ENCODE measurements at regions of chr9 and their contacts with region 1.

Region 1: DNA sequence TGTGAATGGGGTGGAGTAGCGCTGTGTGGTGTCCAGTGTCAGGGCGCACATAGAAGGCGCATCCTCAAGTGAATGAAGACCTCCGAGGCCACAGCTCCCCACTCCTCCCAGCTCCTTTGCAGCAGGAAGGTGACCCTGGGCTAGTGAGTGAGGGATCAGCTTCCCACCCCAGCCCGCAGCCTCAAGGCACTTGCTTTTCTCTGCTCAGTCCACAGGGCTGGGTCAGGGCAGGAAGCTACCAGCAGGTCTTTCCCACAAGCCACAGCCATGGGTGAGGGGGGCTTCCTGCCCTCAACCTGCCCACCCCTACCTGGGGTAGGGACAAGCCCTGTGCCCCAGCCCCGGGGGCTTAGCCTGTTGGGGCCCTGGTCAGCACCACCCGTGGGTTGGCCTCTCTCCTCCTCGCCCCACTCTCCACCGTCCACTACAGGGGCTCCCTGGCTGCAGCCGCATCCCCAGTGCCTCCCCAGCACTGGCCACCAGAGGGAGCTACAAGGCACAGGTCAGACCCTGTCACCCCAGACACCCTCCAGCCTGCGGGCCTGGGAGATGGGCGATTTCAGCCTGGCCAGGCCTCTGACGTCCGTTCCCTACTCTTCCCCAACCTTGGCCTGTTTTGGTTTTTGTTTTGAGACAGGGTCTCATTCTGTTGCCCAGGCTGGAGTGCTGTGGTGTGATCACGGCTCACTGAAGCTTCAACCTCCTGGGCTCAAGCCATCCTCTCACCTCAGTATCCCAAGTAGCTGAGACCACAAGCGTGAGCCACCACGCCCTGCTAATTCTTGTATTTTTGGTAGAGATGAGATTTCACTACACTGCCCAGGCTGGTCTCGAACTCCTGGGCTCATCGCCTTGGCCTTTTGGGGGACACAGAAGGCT is 1.3 kb upstream of the ABCA2 start:
- DNase-seq: peak; percentile 85
- ATAC-seq: peak; percentile 31
- H3K4me3 ChIP-seq: peak overlapping the region; percentile 4 to 77 (median 66)
- H3K4me3 Mint-ChIP-seq: peak overlapping the region; percentile 90
- H3K27ac ChIP-seq: peak overlapping the region in 1 of 2 donors; percentile 71
- H3K27ac Mint-ChIP-seq: peak overlapping the region; percentile 92
- H3K4me1 ChIP-seq: peaks cover 61 to 78% of the 10 kb centered on the region in 2 donors
- H3K4me1 Mint-ChIP-seq: peaks cover 66% of the 10 kb centered on the region
- H3K27me3 ChIP-seq: no peaks in the 10 kb centered on the region
- H3K27me3 Mint-ChIP-seq: no peaks in the 10 kb centered on the region
- CTCF ChIP-seq: peak; percentile 87

Region 2: DNA sequence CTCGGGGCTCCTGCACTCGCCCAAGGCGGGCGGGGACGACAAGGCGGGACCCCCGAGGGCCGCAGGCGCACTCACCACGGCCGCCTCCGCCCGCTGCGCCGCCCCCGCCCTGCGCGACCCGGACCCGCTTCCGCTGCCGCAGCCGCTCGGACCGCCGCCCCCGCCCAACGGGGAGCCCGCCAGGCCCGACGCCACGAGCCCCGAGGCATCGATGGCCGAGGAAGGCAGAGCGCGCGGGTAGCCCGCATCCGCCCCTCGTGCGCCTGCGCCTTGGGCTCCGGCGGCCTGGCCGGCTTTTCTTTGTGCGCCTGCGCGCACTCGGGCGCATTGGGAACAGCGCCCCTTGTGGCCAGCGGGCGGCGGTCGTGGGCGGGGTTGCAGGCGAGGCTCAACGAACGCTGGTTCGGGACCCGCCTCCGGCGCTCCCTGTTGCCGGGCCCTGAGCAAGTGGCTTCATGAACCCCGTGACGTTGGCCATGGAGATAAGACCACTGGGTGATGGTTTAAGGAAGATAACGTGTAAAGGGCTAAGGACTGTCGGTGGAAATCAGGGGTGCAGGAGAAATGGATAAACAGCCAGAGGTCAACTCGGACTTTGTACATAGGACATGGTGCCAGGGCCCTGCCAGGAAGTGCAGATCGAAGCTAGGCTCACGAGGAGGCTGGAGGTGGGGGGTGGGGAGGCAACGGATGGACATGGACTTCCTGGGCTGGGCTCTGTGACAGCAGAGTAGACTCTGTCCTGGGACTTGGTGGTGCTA is 84.6 kb before region 1 on chr9 and contains the starts of genes C8G and FBXW5:
- CTCF ChIA-PET with region 1: interaction called, 39 read pairs
- POLR2A ChIA-PET with region 1: interaction called, 6 read pairs
- intact Hi-C with region 1: no loop called
- DNase-seq: peak; percentile 96
- ATAC-seq: peak; percentile 91
- H3K4me3 ChIP-seq: peak within 1 kb of the TSS; percentile 47 to 72 (median 63)
- H3K4me3 Mint-ChIP-seq: peak within 1 kb of the TSS; percentile 80
- H3K27ac ChIP-seq: peak within 1 kb of the TSS in 1 of 2 donors; percentile 48
- H3K27ac Mint-ChIP-seq: peak within 1 kb of the TSS; percentile 87
- H3K4me1 ChIP-seq: peaks cover 11 to 22% of the 10 kb centered on the region in 2 donors
- H3K4me1 Mint-ChIP-seq: peaks cover 12% of the 10 kb centered on the region
- H3K27me3 ChIP-seq: no peaks in the 10 kb centered on the region
- H3K27me3 Mint-ChIP-seq: no peaks in the 10 kb centered on the region
- CTCF ChIP-seq: peak; percentile 90
- total RNA-seq, gene C8G: 1.7 and 2.8 TPM in 2 replicates
- total RNA-seq, gene FBXW5: 99.6 and 102 TPM in 2 replicates

Region 3: DNA sequence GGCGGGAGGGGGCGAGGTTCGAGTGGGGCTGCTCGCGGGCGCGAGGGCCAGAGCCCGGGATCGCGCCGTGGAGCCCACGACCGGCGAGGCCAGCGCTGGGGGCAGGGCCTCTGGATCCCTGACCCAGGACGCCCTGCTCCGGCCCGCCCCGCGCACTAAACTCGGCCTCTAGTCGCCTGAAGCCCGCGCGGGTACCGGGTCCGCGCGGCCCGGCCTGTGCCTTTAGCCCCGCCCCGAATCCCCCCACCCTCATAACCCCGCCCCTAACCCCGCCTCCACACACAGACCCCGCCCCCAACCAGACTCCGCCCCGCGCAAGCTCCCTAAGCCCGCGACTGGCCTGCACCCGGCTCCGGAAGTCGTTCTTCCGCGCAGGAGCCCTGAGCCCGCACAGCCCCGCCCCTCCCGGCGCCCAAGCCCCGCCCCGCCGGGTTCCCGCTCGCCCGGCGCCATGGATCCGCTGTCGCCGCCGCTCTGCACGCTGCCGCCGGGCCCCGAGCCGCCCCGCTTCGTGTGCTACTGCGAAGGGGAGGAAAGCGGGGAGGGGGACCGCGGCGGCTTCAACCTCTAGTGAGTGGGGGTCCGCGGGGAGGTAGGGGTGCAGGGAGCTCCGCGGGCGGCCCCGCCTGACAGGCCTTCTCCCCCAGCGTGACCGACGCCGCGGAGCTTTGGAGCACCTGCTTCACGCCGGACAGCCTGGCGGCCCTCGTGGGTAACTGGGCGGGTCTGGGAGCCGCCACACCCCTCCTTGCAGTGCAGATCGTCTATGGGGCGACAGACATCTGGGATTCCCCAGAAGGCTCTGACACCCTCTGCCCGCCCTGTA is 37.1 kb before region 1 on chr9 and contains the start of gene PAXX:
- CTCF ChIA-PET with region 1: interaction called, 22 read pairs
- POLR2A ChIA-PET with region 1: interaction called, 19 read pairs
- intact Hi-C with region 1: loop called (anchors 2 kb)
- DNase-seq: peak; percentile 92
- ATAC-seq: peak; percentile 91
- H3K4me3 ChIP-seq: peak within 1 kb of the TSS; percentile 32 to 71 (median 66)
- H3K4me3 Mint-ChIP-seq: peak within 1 kb of the TSS; percentile 91
- H3K27ac ChIP-seq: peak within 1 kb of the TSS; percentile 76 to 97
- H3K27ac Mint-ChIP-seq: peak within 1 kb of the TSS; percentile 91
- H3K4me1 ChIP-seq: peaks cover 27 to 38% of the 10 kb centered on the region in 2 donors
- H3K4me1 Mint-ChIP-seq: peaks cover 26% of the 10 kb centered on the region
- H3K27me3 ChIP-seq: peaks cover 0 to 3% (median 0%) of the 10 kb centered on the region in 4 experiments
- H3K27me3 Mint-ChIP-seq: peaks cover 6% of the 10 kb centered on the region
- CTCF ChIP-seq: no peak
- total RNA-seq, gene PAXX: 73.0 and 74.8 TPM in 2 replicates

Region 4: GRCh38 chr9:137046098-137046787 is 16.9 kb after region 1 on chr9 and contains the start of gene NPDC1:
- CTCF ChIA-PET with region 1: interaction called, 30 read pairs
- POLR2A ChIA-PET with region 1: interaction called, 3 read pairs
- intact Hi-C with region 1: no loop called
- DNase-seq: peak; percentile 89
- ATAC-seq: peak; percentile 96
- H3K4me3 ChIP-seq: peak within 1 kb of the TSS in 3 of 5 experiments; percentile 18 to 46 (median 23)
- H3K4me3 Mint-ChIP-seq: peak within 1 kb of the TSS; percentile 47
- H3K27ac ChIP-seq: no peak within 1 kb of the TSS
- H3K27ac Mint-ChIP-seq: peak within 1 kb of the TSS; percentile 15
- H3K4me1 ChIP-seq: peaks cover 24 to 42% of the 10 kb centered on the region in 2 donors
- H3K4me1 Mint-ChIP-seq: peaks cover 10% of the 10 kb centered on the region
- H3K27me3 ChIP-seq: peaks cover 0 to 86% (median 53%) of the 10 kb centered on the region in 4 experiments
- H3K27me3 Mint-ChIP-seq: peaks cover 17% of the 10 kb centered on the region
- CTCF ChIP-seq: peak; percentile 87
- total RNA-seq, gene NPDC1: 0.17 and 0.39 TPM in 2 replicates

Region 5: DNA sequence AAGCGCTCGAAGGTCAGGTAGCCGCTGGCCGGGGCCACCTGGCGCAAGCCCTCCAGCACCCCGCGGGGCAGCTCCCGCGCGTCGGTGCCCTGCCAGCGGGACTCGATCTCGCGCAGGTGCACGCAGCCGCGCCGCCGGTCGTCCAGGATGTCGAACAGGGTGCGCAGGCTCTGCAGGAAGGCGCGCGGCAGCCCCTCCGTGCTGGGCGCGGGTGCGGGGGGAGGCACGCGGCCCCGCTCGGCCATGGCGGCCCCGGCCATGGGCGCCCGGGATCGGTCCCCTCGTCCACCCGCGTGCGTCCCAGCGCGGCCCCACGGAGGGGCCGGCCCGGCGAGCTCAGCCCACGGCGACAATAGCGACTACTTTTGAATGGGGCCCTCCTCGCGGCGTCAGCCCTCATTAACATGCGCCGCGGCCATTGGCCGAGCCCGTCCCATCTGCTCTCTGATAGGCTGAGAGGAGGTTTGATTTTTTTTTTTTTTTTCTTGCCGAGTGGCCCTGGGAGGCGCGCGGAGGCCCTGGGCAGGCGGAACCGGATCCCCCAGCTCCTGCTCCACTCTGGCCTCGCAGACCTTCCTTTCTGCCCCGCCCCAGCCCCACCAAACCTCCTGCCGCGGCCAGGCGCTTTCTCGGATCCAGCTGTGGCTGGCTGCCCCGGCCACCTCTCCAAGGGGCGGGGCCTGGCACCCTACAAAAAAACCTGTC is 41.1 kb after region 1 on chr9 and contains the start of gene SAPCD2:
- CTCF ChIA-PET with region 1: interaction called, 49 read pairs
- POLR2A ChIA-PET with region 1: interaction called, 4 read pairs
- intact Hi-C with region 1: loop called (anchors 5 kb)
- DNase-seq: peak; percentile 93
- ATAC-seq: peak; percentile 85
- H3K4me3 ChIP-seq: peak within 1 kb of the TSS in 4 of 5 experiments; percentile 36 to 47 (median 44)
- H3K4me3 Mint-ChIP-seq: peak within 1 kb of the TSS; percentile 82
- H3K27ac ChIP-seq: no peak within 1 kb of the TSS
- H3K27ac Mint-ChIP-seq: peak within 1 kb of the TSS; percentile 81
- H3K4me1 ChIP-seq: peaks cover 19 to 36% of the 10 kb centered on the region in 2 donors
- H3K4me1 Mint-ChIP-seq: peaks cover 26% of the 10 kb centered on the region
- H3K27me3 ChIP-seq: peaks cover 0 to 15% (median 1%) of the 10 kb centered on the region in 4 experiments
- H3K27me3 Mint-ChIP-seq: peaks cover 3% of the 10 kb centered on the region
- CTCF ChIP-seq: no peak
- total RNA-seq, gene SAPCD2: 0.39 and 0.73 TPM in 2 replicates

Region 6: DNA sequence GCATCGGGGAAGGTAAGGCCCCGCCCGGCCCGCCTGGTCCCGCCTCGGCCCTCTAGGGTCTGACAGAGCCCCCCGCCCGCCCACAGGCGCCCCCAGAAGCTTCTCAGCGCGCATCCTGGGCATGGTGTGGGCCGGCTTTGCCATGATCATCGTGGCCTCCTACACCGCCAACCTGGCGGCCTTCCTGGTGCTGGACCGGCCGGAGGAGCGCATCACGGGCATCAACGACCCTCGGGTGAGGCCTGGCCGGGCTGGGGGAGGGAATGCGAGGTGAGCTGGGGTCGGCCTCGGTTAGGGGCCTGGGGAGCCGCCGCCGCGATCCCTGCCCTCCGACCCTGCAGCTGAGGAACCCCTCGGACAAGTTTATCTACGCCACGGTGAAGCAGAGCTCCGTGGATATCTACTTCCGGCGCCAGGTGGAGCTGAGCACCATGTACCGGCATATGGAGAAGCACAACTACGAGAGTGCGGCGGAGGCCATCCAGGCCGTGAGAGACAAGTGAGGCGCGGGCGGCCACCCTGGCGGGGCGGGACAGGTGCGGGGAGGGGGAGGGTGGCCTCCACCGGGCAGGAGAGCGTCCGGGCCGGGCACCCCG is 133.3 kb after region 1 on chr9:
- CTCF ChIA-PET with region 1: no interaction called
- POLR2A ChIA-PET with region 1: no interaction called
- intact Hi-C with region 1: no loop called
- DNase-seq: no peak
- ATAC-seq: no peak
- H3K4me3 ChIP-seq: no peak overlapping the region
- H3K4me3 Mint-ChIP-seq: peak overlapping the region; percentile 13
- H3K27ac ChIP-seq: no peak overlapping the region
- H3K27ac Mint-ChIP-seq: no peak overlapping the region
- H3K4me1 ChIP-seq: peaks cover 9 to 30% of the 10 kb centered on the region in 2 donors
- H3K4me1 Mint-ChIP-seq: peaks cover 19% of the 10 kb centered on the region
- H3K27me3 ChIP-seq: peaks cover 0 to 83% (median 36%) of the 10 kb centered on the region in 4 experiments
- H3K27me3 Mint-ChIP-seq: peaks cover 46% of the 10 kb centered on the region
- CTCF ChIP-seq: no peak

Region 7: GRCh38 chr9:137200311-137201204 is 171.3 kb after region 1 on chr9 and contains the start of gene TPRN:
- CTCF ChIA-PET with region 1: no interaction called
- POLR2A ChIA-PET with region 1: no interaction called
- intact Hi-C with region 1: no loop called
- DNase-seq: peak; percentile 99
- ATAC-seq: peak; percentile 95
- H3K4me3 ChIP-seq: peak within 1 kb of the TSS; percentile 12 to 80 (median 75)
- H3K4me3 Mint-ChIP-seq: peak within 1 kb of the TSS; percentile 88
- H3K27ac ChIP-seq: peak within 1 kb of the TSS; percentile 78 to 89
- H3K27ac Mint-ChIP-seq: peak within 1 kb of the TSS; percentile 90
- H3K4me1 ChIP-seq: peaks cover 31 to 41% of the 10 kb centered on the region in 2 donors
- H3K4me1 Mint-ChIP-seq: peaks cover 29% of the 10 kb centered on the region
- H3K27me3 ChIP-seq: peaks cover 0 to 6% (median 0%) of the 10 kb centered on the region in 4 experiments
- H3K27me3 Mint-ChIP-seq: no peaks in the 10 kb centered on the region
- CTCF ChIP-seq: no peak
- total RNA-seq, gene TPRN: 16.3 and 19.3 TPM in 2 replicates

Region 8: GRCh38 chr9:137213160-137214060 is 184.1 kb after region 1 on chr9:
- CTCF ChIA-PET with region 1: no interaction called
- POLR2A ChIA-PET with region 1: no interaction called
- intact Hi-C with region 1: no loop called
- DNase-seq: no peak
- ATAC-seq: no peak
- H3K4me3 ChIP-seq: no peak overlapping the region
- H3K4me3 Mint-ChIP-seq: no peak overlapping the region
- H3K27ac ChIP-seq: no peak overlapping the region
- H3K27ac Mint-ChIP-seq: no peak overlapping the region
- H3K4me1 ChIP-seq: no peaks in the 10 kb centered on the region
- H3K4me1 Mint-ChIP-seq: no peaks in the 10 kb centered on the region
- H3K27me3 ChIP-seq: no peaks in the 10 kb centered on the region
- H3K27me3 Mint-ChIP-seq: no peaks in the 10 kb centered on the region
- CTCF ChIP-seq: no peak

Region 9: DNA sequence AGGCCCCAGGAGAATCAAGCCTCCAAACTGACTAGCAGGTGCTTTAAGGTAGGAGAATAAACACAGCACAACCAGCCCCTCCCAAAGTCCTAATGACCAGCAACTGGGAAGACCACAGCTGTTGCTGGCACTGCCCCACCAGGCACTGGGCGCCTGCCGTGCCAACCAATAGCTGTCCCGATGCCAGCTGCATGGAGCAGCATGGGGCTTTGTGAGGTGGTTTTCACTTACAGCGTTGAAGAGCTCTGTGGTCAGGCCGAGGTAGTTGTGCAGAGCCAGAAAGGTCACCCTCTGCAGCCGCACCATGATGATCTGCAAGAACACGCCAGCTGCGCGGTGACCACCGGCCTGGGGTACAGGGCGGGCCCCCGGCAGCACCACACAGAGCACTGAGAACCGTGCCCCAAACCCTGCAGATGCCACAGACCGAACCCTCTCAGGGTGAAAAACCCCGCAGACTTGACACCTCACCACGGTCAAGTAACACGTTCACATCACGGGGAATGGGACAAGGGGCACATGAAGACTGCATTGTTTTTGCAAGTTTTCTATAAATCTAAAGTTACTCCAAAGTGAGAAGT is 492.2 kb after region 1 on chr9:
- CTCF ChIA-PET with region 1: no interaction called
- POLR2A ChIA-PET with region 1: no interaction called
- intact Hi-C with region 1: no loop called
- DNase-seq: no peak
- ATAC-seq: no peak
- H3K4me3 ChIP-seq: no peak overlapping the region
- H3K4me3 Mint-ChIP-seq: no peak overlapping the region
- H3K27ac ChIP-seq: no peak overlapping the region
- H3K27ac Mint-ChIP-seq: no peak overlapping the region
- H3K4me1 ChIP-seq: peaks cover 0 to 4% of the 10 kb centered on the region in 2 donors
- H3K4me1 Mint-ChIP-seq: peaks cover 3% of the 10 kb centered on the region
- H3K27me3 ChIP-seq: no peaks in the 10 kb centered on the region
- H3K27me3 Mint-ChIP-seq: no peaks in the 10 kb centered on the region
- CTCF ChIP-seq: no peak